Heart right ventricle (tissue), 16 donors: ENCODE measurements at regions of chr6 and their contacts with region 1.

Region 1: DNA sequence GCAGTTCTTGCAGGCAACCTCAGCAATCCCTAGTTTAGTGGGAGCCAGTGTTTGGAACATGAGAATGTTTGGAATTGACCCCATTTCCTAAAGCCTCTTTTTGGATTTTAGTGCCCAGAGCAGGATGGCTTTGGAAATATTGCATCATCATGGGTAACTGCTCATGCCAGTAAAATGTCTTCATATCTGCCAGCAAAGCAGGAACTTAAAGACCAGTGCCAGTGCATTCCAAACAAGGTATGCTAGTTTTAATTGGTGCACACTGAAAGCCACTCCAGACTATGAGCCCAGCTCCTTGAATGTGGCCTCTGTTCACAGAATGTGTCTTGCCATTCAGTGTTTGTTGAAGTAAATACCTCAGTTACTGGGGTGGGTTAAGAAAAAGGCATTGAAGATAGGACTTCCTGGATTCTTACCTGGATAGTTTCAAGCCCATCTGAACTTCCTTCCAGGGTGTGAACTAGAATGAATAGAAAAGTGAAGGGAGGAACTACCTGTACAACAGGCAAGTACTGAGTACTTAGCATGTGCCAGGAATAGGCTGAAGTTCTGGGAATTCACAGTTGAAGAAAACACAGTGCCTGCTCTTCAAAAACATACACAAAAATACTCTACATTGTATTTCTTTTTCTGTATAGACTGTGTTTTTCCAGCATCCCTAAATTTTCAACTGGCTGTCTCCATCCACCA is 70.5 kb downstream of the COL19A1 start:
- DNase-seq: peak in 1 of 2 donors; percentile 21
- ATAC-seq: peak; percentile 79 to 93 (median 86)
- H3K4me3 ChIP-seq: no peak overlapping the region
- H3K27ac ChIP-seq: peak overlapping the region in 7 of 10 donors; percentile 16 to 59 (median 41)
- H3K4me1 ChIP-seq: peaks cover 0 to 18% (median 0%) of the 10 kb centered on the region in 9 donors
- H3K27me3 ChIP-seq: no peaks in the 10 kb centered on the region
- CTCF ChIP-seq: no peak

Region 2: DNA sequence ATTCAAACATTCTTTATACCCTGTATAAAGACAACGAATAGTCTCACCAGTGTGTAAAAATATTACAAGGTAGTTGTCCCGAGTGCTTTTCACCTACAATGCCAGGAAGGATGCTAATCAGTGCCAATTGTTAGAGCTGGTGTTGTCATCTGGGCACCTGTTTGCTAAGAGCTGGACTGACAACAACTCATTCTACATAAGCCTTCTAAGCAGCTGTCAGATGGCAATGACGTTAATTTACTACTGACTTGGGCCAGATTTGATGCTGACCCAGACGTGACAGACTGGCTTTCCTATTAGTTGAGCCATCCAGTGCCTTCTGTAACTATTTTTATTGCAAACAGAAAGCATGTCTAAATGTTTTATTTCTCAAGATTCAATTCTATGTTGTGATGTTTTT is 946.5 kb before region 1 on chr6:
- intact Hi-C with region 1: loop called in 1 of 10 experiments (anchors 10 kb)
- DNase-seq: no peak
- ATAC-seq: peak in 4 of 8 donors; percentile 27 to 95 (median 71)
- H3K4me3 ChIP-seq: no peak overlapping the region
- H3K27ac ChIP-seq: no peak overlapping the region
- H3K4me1 ChIP-seq: no peaks in the 10 kb centered on the region
- H3K27me3 ChIP-seq: no peaks in the 10 kb centered on the region
- CTCF ChIP-seq: no peak

Region 3: GRCh38 chr6:69866770-69867638 is 69.8 kb before region 1 on chr6:
- intact Hi-C with region 1: loop called in 1 of 10 experiments (anchors 10 kb)
- DNase-seq: peak; percentile 47 to 71
- ATAC-seq: peak; percentile 80 to 96 (median 85)
- H3K4me3 ChIP-seq: peak overlapping the region; percentile 42 to 70 (median 63)
- H3K27ac ChIP-seq: peak overlapping the region in 9 of 10 donors; percentile 38 to 72 (median 47)
- H3K4me1 ChIP-seq: peaks cover 0 to 22% (median 11%) of the 10 kb centered on the region in 9 donors
- H3K27me3 ChIP-seq: peaks cover 0 to 74% (median 8%) of the 10 kb centered on the region in 7 donors
- CTCF ChIP-seq: peak in 5 of 9 donors; percentile 12 to 51 (median 34)

Region 4: DNA sequence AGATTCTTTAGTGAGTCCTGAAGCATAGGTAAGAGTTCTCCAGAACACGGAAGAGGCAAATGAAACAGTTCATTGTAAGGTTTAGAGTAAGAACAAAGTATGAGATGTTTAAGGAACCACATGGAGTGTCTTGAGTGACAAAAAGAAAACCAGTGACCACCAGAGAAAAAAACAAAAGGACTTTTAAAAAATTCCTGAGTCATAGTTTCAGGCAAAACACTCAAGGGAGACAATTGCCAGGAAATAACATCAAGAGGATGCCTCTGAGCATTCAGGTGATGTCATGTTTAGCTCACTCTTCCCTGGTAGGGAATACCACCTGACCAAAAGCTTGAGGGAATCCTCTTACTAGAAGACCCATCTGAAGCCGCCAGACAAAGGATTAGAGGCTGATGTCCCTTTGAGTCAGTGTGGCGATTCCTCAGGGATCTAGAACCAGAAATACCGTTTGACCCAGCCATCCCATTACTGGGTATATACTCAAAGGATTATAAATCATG is 39.8 kb after region 1 on chr6:
- intact Hi-C with region 1: loop called in 1 of 10 experiments (anchors 1 kb)
- DNase-seq: no peak
- ATAC-seq: no peak
- H3K4me3 ChIP-seq: no peak overlapping the region
- H3K27ac ChIP-seq: no peak overlapping the region
- H3K4me1 ChIP-seq: peaks cover 0 to 13% (median 0%) of the 10 kb centered on the region in 9 donors
- H3K27me3 ChIP-seq: no peaks in the 10 kb centered on the region
- CTCF ChIP-seq: no peak

Region 5: GRCh38 chr6:71181565-71181964 is 1244.7 kb after region 1 on chr6:
- intact Hi-C with region 1: no loop called
- DNase-seq: no peak
- ATAC-seq: peak in 2 of 8 donors; percentile 42 to 81
- H3K4me3 ChIP-seq: no peak overlapping the region
- H3K27ac ChIP-seq: no peak overlapping the region
- H3K4me1 ChIP-seq: peaks cover 0 to 10% (median 0%) of the 10 kb centered on the region in 9 donors
- H3K27me3 ChIP-seq: no peaks in the 10 kb centered on the region
- CTCF ChIP-seq: no peak